Left ventricle myocardium inferior (tissue), 1 donor: ENCODE measurements at regions of chr9 and their contacts with region 1.

Region 1: DNA sequence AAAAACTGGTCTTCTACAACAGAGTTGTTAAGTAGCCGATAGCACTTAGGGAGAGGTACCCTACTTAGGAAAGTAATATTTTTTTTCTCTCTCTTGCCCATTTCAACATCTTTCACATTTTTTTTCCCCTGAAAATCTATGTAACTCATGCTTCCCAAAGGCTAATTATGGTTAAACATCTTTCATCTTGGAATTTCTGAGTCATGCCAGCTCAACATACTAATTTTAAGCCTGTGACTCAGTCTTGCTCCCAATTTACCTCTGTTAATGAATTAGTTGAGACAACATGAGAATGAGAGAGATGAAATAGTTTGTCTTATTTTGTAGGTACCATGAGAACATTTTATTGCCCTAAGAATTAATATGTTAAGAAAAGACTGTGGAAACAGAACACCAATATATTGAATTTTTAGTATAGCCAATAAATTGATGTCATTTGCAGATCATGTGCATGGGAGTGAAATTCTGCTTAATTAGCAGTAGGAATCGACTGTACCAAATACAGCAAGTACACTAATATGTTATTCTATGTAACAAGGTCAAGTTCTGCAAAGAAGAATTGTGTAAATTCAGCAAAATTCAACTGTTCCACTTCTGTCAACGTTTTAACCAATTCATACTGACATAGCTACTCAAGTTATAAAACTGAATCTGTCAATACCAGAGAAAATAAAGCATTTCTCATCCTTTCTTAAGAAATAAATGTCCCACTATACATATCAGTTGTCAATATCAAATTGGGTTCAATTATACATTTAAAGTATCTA is 550.0 kb downstream of the PTPRD start:
- DNase-seq: no peak
- H3K4me3 ChIP-seq: no peak overlapping the region
- H3K27ac ChIP-seq: no peak overlapping the region
- H3K4me1 ChIP-seq: no peaks in the 10 kb centered on the region
- H3K27me3 ChIP-seq: no peaks in the 10 kb centered on the region
- CTCF ChIP-seq: no peak

Region 2: GRCh38 chr9:10251490-10251889 is 188.7 kb after region 1 on chr9:
- intact Hi-C with region 1: no loop called
- DNase-seq: no peak
- H3K4me3 ChIP-seq: no peak overlapping the region
- H3K27ac ChIP-seq: peak overlapping the region; percentile 59
- H3K4me1 ChIP-seq: peaks cover 8% of the 10 kb centered on the region
- H3K27me3 ChIP-seq: no peaks in the 10 kb centered on the region
- CTCF ChIP-seq: no peak

Region 3: DNA sequence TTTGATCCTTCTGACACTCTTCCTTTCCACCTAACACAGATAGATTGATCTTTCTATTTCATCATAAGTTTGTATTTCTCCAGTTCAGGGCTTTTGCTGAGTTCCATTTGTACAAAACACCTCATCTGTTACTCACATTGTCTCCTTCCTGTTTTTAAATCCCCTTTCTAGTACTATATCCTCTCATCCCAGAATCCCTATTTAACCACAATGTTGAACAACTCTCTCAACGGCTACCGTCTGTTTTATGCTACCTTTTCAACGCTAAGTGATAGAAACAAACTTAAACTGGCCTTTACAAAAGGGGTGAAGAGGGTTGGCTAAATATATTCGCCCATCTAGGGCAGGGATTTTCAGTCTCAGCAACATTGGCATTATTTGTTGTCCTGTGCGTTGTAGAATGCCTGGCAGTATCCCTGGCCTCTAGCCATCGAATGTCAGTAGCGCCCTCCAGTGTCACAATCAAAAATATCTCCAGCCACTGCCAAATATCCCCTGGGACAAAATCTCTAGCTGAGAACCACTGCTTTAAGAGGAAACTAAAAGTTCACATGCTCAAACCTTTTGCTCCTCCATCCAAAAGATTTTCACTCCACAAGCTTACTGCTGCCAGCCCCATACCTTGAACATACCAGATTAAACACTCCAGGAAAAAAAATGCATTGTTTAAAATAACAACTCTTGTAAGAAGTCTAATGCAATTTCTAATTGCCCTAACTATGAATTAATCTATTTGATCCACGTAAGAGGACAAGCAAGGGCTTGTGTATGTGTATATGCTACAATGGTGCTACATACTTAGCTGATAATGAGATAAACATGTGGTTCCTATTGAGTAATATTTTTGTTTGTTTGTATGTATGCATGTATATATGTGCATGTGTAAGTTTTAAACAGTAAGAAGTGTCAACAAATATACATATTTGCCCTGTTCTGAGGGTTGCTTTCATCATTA is 206.0 kb after region 1 on chr9:
- intact Hi-C with region 1: loop called (anchors 5 kb)
- DNase-seq: no peak
- H3K4me3 ChIP-seq: no peak overlapping the region
- H3K27ac ChIP-seq: peak overlapping the region; percentile 26
- H3K4me1 ChIP-seq: peaks cover 10% of the 10 kb centered on the region
- H3K27me3 ChIP-seq: no peaks in the 10 kb centered on the region
- CTCF ChIP-seq: peak; percentile 63